ENCODE measurements at regions of chr16 and their contacts with region 1.

Region 1: GRCh38 chr16:27401768-27402568 is at the start of gene IL21R:
- DNase-seq: peak; percentile 92
- ATAC-seq: peak; percentile 64
- H3K4me3 Mint-ChIP-seq: peak within 1 kb of the TSS; percentile 96
- H3K27ac Mint-ChIP-seq: peak within 1 kb of the TSS; percentile 96
- H3K4me1 Mint-ChIP-seq: peaks cover 63% of the 10 kb centered on the region
- H3K27me3 Mint-ChIP-seq: no peaks in the 10 kb centered on the region
- total RNA-seq, gene IL21R: 24.6 to 38.0 TPM

Region 2: GRCh38 chr16:27387724-27388123 is 14.2 kb before region 1 on chr16:
- CTCF ChIA-PET with region 1: interaction called, 22 read pairs
- DNase-seq: peak; percentile 51
- ATAC-seq: peak; percentile 93
- H3K4me3 Mint-ChIP-seq: no peak overlapping the region
- H3K27ac Mint-ChIP-seq: no peak overlapping the region
- H3K4me1 Mint-ChIP-seq: peaks cover 31% of the 10 kb centered on the region
- H3K27me3 Mint-ChIP-seq: no peaks in the 10 kb centered on the region

Region 3: DNA sequence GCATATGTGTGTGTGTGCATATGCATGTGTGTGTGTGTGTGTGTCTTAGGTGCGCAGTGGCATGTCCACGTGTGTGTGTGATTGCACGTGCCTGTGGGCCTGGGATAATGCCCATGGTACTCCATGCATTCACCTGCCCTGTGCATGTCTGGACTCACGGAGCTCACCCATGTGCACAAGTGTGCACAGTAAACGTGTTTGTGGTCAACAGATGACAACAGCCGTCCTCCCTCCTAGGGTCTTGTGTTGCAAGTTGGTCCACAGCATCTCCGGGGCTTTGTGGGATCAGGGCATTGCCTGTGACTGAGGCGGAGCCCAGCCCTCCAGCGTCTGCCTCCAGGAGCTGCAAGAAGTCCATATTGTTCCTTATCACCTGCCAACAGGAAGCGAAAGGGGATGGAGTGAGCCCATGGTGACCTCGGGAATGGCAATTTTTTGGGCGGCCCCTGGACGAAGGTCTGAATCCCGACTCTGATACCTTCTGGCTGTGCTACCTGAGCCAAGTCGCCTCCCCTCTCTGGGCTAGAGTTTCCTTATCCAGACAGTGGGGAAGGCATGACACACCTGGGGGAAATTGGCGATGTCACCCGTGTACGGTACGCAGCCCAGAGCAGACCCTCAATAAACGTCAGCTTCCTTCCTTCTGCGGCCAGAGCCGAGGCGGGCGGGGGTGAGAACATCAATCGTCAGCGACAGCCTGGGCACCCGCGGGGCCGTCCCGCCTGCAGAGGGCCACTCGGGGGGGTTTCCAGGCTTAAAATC is 47.6 kb after region 1 on chr16:
- CTCF ChIA-PET with region 1: interaction called, 14 read pairs
- DNase-seq: peak; percentile 91
- ATAC-seq: peak; percentile 75
- H3K4me3 Mint-ChIP-seq: peak overlapping the region; percentile 42
- H3K27ac Mint-ChIP-seq: peak overlapping the region; percentile 92
- H3K4me1 Mint-ChIP-seq: peaks cover 69% of the 10 kb centered on the region
- H3K27me3 Mint-ChIP-seq: no peaks in the 10 kb centered on the region

Measured in activated CD8-positive, alpha-beta memory T cell treated with anti-CD3 and anti-CD28 coated beads, Interleukin-2, amount 10 ng/mL, durations not matched to agents 7 days and 5 days (primary cell).